ENCODE measurements at regions of chr15 and their contacts with region 1.

Region 1: DNA sequence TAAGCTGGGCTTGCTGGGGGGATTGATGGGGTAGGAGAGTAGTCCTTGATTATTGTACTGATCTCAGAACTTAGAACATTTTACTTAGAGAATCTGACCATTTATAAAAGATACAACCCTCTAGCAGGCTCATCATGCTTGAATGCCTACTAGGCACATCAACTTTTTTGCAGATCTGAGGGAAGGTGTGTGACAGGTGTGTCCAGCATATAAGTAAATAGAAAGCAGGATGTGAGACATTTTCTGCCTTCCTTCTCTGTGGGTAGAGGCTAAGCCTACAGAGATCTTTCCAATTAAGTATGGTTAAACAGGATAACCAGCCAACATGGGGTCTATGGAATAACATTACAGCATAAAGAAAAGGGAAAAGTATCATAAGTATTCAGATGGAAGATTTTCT is 159.1 kb downstream of the AKAP13 start:
- DNase-seq: no peak
- H3K4me3 ChIP-seq: no peak overlapping the region
- H3K27ac ChIP-seq: no peak overlapping the region
- H3K4me1 ChIP-seq: peaks cover 0 to 20% (median 2%) of the 10 kb centered on the region in 4 donors
- H3K27me3 ChIP-seq: no peaks in the 10 kb centered on the region
- CTCF ChIP-seq: no peak

Region 2: GRCh38 chr15:85579957-85580694 is 40.6 kb after region 1 on chr15:
- intact Hi-C with region 1: loop called (anchors 5 kb)
- DNase-seq: peak in 1 of 2 donors; percentile 48
- H3K4me3 ChIP-seq: peak overlapping the region in 1 of 2 donors; percentile 2
- H3K27ac ChIP-seq: peak overlapping the region; percentile 42 to 63
- H3K4me1 ChIP-seq: peaks cover 0 to 59% (median 27%) of the 10 kb centered on the region in 4 donors
- H3K27me3 ChIP-seq: no peaks in the 10 kb centered on the region
- CTCF ChIP-seq: no peak